ENCODE measurements at regions of chr17 and their contacts with region 1.

Region 1: DNA sequence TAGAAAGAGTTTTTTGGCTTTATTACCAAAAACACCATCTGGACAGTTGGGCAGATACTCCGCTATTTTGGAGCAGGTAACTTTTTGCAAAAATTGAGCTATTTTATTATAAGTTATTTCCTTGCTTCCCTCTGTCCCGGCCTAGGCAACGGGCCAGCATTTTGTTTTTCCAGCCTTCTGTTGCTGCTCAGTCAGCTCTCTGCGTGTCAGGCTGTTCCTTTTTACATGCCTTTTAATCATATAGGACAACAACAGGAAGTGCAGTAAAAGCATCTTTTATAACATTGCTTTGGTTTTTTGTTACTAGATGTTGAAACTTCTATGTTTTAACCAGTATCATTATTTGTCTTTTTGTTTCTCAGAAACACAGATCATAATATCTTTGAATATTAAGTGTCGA is 30.4 kb downstream of the PPM1D start:
- DNase-seq: no peak
- H3K4me3 Mint-ChIP-seq: no peak overlapping the region
- H3K27ac Mint-ChIP-seq: no peak overlapping the region
- H3K4me1 Mint-ChIP-seq: no peaks in the 10 kb centered on the region
- H3K27me3 Mint-ChIP-seq: no peaks in the 10 kb centered on the region
- CTCF ChIP-seq: no peak

Region 2: GRCh38 chr17:60468371-60468770 is 162.0 kb before region 1 on chr17:
- CTCF ChIA-PET with region 1: no interaction called
- intact Hi-C with region 1: loop called (anchors 10 kb)
- DNase-seq: no peak
- H3K4me3 Mint-ChIP-seq: no peak overlapping the region
- H3K27ac Mint-ChIP-seq: no peak overlapping the region
- H3K4me1 Mint-ChIP-seq: peaks cover 8% of the 10 kb centered on the region
- H3K27me3 Mint-ChIP-seq: no peaks in the 10 kb centered on the region
- CTCF ChIP-seq: no peak

Region 3: GRCh38 chr17:60577147-60577915 is 53.0 kb before region 1 on chr17:
- CTCF ChIA-PET with region 1: interaction called, 4 read pairs
- intact Hi-C with region 1: loop called (anchors 10 kb)
- DNase-seq: no peak
- H3K4me3 Mint-ChIP-seq: peak overlapping the region; percentile 37
- H3K27ac Mint-ChIP-seq: no peak overlapping the region
- H3K4me1 Mint-ChIP-seq: peaks cover 6% of the 10 kb centered on the region
- H3K27me3 Mint-ChIP-seq: no peaks in the 10 kb centered on the region
- CTCF ChIP-seq: no peak

Measured in Calu3 (cell line).